ENCODE measurements at regions of chr4 and their contacts with region 1.

Region 1: GRCh38 chr4:55948726-55949474 is at the start of gene CEP135:
- DNase-seq: peak; percentile 75
- ATAC-seq: peak; percentile 81
- H3K4me3 ChIP-seq: peak within 1 kb of the TSS; percentile 76
- H3K27ac ChIP-seq: peak within 1 kb of the TSS; percentile 95
- H3K4me1 ChIP-seq: no peaks in the 10 kb centered on the region
- H3K27me3 ChIP-seq: no peaks in the 10 kb centered on the region
- CTCF ChIP-seq: peak; percentile 88 to 99 (median 93); a peak in 5 of 6 replicates
- EP300 ChIP-seq: peak; percentile 21 to 45; a peak in 1 of 4 replicates
- POLR2A ChIP-seq: peak; percentile 88
- RAD21 ChIP-seq: peak; percentile 78
- polyA plus RNA-seq, gene CEP135: 2.9 to 4.5 TPM

Region 2: DNA sequence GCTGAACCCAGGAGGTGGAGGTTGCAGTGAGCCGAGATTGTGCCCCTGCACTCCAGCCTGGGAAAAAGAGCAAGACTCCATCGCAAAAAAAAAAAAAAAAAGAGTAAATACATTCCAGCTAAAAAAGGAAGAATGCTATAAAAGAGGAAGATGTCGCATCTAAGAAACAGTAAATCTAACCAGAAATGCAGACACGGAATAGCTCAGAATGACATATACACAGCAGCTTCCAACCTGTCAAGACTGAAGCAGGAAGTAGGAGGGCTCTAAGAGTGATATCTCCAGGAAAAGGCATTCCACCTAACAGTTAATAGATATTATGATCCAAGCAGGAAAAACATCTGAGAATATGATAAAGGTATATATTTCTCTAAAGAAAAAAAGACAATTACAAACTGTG is 418.2 kb before region 1 on chr4:
- CTCF ChIA-PET with region 1: no interaction called
- POLR2A ChIA-PET with region 1: no interaction called
- RAD21 ChIA-PET with region 1: no interaction called
- SMC1A ChIA-PET with region 1: no interaction called
- in situ Hi-C with region 1: no loop called
- intact Hi-C with region 1: no loop called
- DNase-seq: no peak
- ATAC-seq: no peak
- H3K4me3 ChIP-seq: no peak overlapping the region
- H3K27ac ChIP-seq: no peak overlapping the region
- H3K4me1 ChIP-seq: no peaks in the 10 kb centered on the region
- H3K27me3 ChIP-seq: no peaks in the 10 kb centered on the region
- CTCF ChIP-seq: no peak
- EP300 ChIP-seq: no peak
- POLR2A ChIP-seq: no peak
- RAD21 ChIP-seq: no peak

Region 3: DNA sequence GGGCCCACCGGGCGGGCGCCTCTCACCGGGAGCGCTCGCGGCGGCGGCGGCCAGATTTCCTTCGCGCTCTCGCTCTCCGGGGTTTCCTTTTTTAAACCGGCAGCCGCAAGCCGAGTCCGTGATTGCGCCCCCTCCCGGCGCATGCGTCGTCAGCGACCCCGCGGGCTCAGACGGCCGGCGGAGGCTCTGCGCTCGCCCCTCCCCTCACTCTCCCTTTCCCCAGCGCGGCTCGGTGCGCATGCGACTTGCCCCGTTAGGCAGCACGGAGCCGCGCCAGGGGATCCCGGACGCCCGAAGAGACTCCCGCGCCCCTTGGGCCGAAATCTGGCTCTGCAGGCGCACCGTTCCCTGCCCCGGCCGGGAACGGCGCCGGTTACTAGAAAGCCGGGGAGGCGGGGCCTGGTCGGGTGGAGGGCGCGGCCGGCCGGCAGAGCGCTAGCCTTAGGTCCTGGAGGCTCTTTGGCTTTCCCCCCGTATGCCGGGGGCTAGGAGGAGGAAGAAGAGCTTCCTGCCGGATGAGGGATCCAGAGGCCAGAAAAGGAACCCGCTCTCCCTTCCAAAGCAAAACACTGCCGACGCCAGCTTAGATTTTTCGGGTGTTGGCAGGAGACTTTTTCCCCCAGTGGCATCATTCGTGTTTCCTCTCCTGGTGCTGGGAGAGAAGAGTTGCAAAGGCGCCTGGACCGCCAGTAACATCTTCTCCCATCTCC is 402.0 kb before region 1 on chr4 and contains the start of gene CLOCK:
- CTCF ChIA-PET with region 1: no interaction called
- POLR2A ChIA-PET with region 1: no interaction called
- RAD21 ChIA-PET with region 1: interaction called, 10 read pairs
- SMC1A ChIA-PET with region 1: no interaction called
- in situ Hi-C with region 1: no loop called
- intact Hi-C with region 1: no loop called
- DNase-seq: no peak
- ATAC-seq: peak; percentile 84
- H3K4me3 ChIP-seq: peak within 1 kb of the TSS; percentile 80
- H3K27ac ChIP-seq: peak within 1 kb of the TSS; percentile 88
- H3K4me1 ChIP-seq: no peaks in the 10 kb centered on the region
- H3K27me3 ChIP-seq: no peaks in the 10 kb centered on the region
- CTCF ChIP-seq: peak; percentile 32 to 52 (median 33); a peak in 5 of 6 replicates
- EP300 ChIP-seq: no peak
- POLR2A ChIP-seq: peak; percentile 74
- RAD21 ChIP-seq: no peak
- polyA plus RNA-seq, gene CLOCK: 2.8 to 3.5 TPM

Region 4: GRCh38 chr4:55965585-55965984 is 16.7 kb after region 1 on chr4:
- CTCF ChIA-PET with region 1: interaction called, 11 read pairs
- POLR2A ChIA-PET with region 1: no interaction called
- RAD21 ChIA-PET with region 1: interaction called, 3 read pairs
- SMC1A ChIA-PET with region 1: interaction called, 14 read pairs
- in situ Hi-C with region 1: no loop called
- intact Hi-C with region 1: no loop called
- DNase-seq: no peak
- ATAC-seq: no peak
- H3K4me3 ChIP-seq: no peak overlapping the region
- H3K27ac ChIP-seq: no peak overlapping the region
- H3K4me1 ChIP-seq: no peaks in the 10 kb centered on the region
- H3K27me3 ChIP-seq: no peaks in the 10 kb centered on the region
- CTCF ChIP-seq: no peak
- EP300 ChIP-seq: no peak
- POLR2A ChIP-seq: no peak
- RAD21 ChIP-seq: no peak

Region 5: GRCh38 chr4:55980725-55981124 is 31.8 kb after region 1 on chr4:
- CTCF ChIA-PET with region 1: interaction called, 14 read pairs
- POLR2A ChIA-PET with region 1: interaction called, 4 read pairs
- RAD21 ChIA-PET with region 1: interaction called, 13 read pairs
- SMC1A ChIA-PET with region 1: interaction called, 9 read pairs
- in situ Hi-C with region 1: no loop called
- intact Hi-C with region 1: no loop called
- DNase-seq: peak; percentile 21
- ATAC-seq: peak; percentile 83
- H3K4me3 ChIP-seq: no peak overlapping the region
- H3K27ac ChIP-seq: peak overlapping the region; percentile 40
- H3K4me1 ChIP-seq: peaks cover 6% of the 10 kb centered on the region
- H3K27me3 ChIP-seq: no peaks in the 10 kb centered on the region
- CTCF ChIP-seq: no peak
- EP300 ChIP-seq: no peak
- POLR2A ChIP-seq: no peak
- RAD21 ChIP-seq: no peak

Region 6: DNA sequence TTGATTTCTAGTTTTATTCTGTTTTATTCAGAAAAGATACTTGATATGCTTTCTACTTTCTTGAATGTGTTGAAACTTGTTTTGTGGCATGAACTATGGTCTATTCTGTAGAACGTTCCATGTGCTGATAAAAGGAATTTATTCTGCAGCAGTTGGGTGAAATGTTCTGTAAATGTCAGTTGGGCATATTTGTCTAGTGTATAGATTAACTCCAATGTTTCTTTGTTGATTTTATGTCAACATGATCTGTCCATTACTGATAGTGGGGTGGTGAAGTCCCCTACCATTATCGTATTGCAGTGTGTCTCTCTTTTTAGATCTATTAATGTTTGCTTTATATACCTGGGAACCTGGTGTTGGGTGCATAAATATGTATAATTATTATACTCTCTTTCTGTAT is 55.3 kb after region 1 on chr4:
- CTCF ChIA-PET with region 1: interaction called, 10 read pairs
- POLR2A ChIA-PET with region 1: interaction called, 3 read pairs
- RAD21 ChIA-PET with region 1: interaction called, 5 read pairs
- SMC1A ChIA-PET with region 1: interaction called, 7 read pairs
- in situ Hi-C with region 1: no loop called
- intact Hi-C with region 1: no loop called
- DNase-seq: no peak
- ATAC-seq: no peak
- H3K4me3 ChIP-seq: no peak overlapping the region
- H3K27ac ChIP-seq: no peak overlapping the region
- H3K4me1 ChIP-seq: no peaks in the 10 kb centered on the region
- H3K27me3 ChIP-seq: no peaks in the 10 kb centered on the region
- CTCF ChIP-seq: no peak
- EP300 ChIP-seq: no peak
- POLR2A ChIP-seq: no peak
- RAD21 ChIP-seq: no peak

Region 7: DNA sequence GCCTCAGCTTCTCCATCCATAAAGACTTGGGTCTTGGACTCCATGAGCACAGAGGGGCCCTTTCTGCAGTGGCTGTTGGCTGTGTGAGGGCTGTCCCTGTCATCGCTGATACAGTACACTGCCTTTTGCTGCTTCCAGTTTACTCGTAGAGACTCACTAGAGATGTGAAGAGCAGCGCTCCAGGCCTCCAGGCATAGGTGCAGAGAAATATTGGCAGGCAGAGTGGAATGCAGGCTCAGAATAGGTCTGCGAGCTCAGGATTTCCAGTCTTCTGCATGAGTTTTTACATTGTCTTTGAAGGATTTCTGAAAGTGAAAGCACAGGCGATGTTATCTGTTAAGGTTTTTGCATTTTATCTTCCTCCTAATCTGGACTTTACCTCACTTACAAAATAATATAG is 341.0 kb after region 1 on chr4:
- CTCF ChIA-PET with region 1: interaction called, 3 read pairs
- POLR2A ChIA-PET with region 1: no interaction called
- RAD21 ChIA-PET with region 1: no interaction called
- SMC1A ChIA-PET with region 1: no interaction called
- in situ Hi-C with region 1: loop called (anchors 10 kb)
- intact Hi-C with region 1: no loop called
- DNase-seq: no peak
- ATAC-seq: no peak; the same call in 1 of the 3 replicates
- H3K4me3 ChIP-seq: no peak overlapping the region
- H3K27ac ChIP-seq: no peak overlapping the region
- H3K4me1 ChIP-seq: no peaks in the 10 kb centered on the region
- H3K27me3 ChIP-seq: no peaks in the 10 kb centered on the region
- CTCF ChIP-seq: no peak
- EP300 ChIP-seq: no peak
- POLR2A ChIP-seq: no peak
- RAD21 ChIP-seq: no peak

Region 8: GRCh38 chr4:56387023-56388001 is 438.4 kb after region 1 on chr4 and contains the start of gene AASDH:
- CTCF ChIA-PET with region 1: interaction called, 8 read pairs
- POLR2A ChIA-PET with region 1: no interaction called
- RAD21 ChIA-PET with region 1: interaction called, 7 read pairs
- SMC1A ChIA-PET with region 1: interaction called, 3 read pairs
- in situ Hi-C with region 1: no loop called
- intact Hi-C with region 1: loop called (anchors 5 kb)
- DNase-seq: peak; percentile 87
- ATAC-seq: peak; percentile 96
- H3K4me3 ChIP-seq: peak within 1 kb of the TSS; percentile 83
- H3K27ac ChIP-seq: peak within 1 kb of the TSS; percentile 90
- H3K4me1 ChIP-seq: peaks cover 5% of the 10 kb centered on the region
- H3K27me3 ChIP-seq: no peaks in the 10 kb centered on the region
- CTCF ChIP-seq: no peak
- EP300 ChIP-seq: no peak
- POLR2A ChIP-seq: peak; percentile 97
- RAD21 ChIP-seq: no peak
- polyA plus RNA-seq, gene AASDH: 11.6 to 19.1 TPM